HCT116 (cell line): ENCODE measurements at regions of chr5 and their contacts with region 1.

Region 1: GRCh38 chr5:87400305-87400899 is 12.3 kb downstream of the CCNH start:
- DNase-seq: peak; percentile 10
- ATAC-seq: peak; percentile 73
- H3K4me3 ChIP-seq: no peak overlapping the region
- H3K27ac ChIP-seq: no peak overlapping the region
- H3K4me1 ChIP-seq: no peaks in the 10 kb centered on the region
- H3K27me3 ChIP-seq: no peaks in the 10 kb centered on the region
- CTCF ChIP-seq: peak; percentile 44 to 68 (median 53); a peak in 5 of 6 replicates
- POLR2A ChIP-seq: no peak
- RAD21 ChIP-seq: peak; percentile 72

Region 2: DNA sequence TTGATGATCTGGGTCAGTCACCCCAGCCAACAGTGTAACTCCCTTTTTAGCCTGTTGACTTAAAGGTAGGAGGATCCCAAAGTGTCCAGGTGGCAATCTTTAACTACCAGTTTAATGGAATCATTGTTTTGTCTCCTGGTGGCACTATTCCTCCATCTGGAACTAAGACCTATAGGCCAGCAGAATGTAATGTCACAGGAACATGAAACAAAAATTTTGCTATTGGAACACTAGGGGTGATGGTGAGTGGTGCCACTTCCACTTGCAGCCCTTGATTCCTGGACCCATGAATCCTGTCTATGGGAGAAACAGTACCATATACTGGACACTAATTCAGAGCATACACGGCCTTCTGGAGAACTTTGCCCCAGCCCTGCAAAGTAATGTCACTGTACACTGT is 352.2 kb before region 1 on chr5:
- CTCF ChIA-PET with region 1: no interaction called
- POLR2A ChIA-PET with region 1: no interaction called
- RAD21 ChIA-PET with region 1: no interaction called
- intact Hi-C with region 1: loop called (anchors 1 kb)
- DNase-seq: peak; percentile 19
- ATAC-seq: peak; percentile 67
- H3K4me3 ChIP-seq: no peak overlapping the region
- H3K27ac ChIP-seq: no peak overlapping the region
- H3K4me1 ChIP-seq: no peaks in the 10 kb centered on the region
- H3K27me3 ChIP-seq: no peaks in the 10 kb centered on the region
- CTCF ChIP-seq: peak; percentile 9 to 38 (median 28); a peak in 2 of 6 replicates
- POLR2A ChIP-seq: no peak
- RAD21 ChIP-seq: peak; percentile 47

Region 3: DNA sequence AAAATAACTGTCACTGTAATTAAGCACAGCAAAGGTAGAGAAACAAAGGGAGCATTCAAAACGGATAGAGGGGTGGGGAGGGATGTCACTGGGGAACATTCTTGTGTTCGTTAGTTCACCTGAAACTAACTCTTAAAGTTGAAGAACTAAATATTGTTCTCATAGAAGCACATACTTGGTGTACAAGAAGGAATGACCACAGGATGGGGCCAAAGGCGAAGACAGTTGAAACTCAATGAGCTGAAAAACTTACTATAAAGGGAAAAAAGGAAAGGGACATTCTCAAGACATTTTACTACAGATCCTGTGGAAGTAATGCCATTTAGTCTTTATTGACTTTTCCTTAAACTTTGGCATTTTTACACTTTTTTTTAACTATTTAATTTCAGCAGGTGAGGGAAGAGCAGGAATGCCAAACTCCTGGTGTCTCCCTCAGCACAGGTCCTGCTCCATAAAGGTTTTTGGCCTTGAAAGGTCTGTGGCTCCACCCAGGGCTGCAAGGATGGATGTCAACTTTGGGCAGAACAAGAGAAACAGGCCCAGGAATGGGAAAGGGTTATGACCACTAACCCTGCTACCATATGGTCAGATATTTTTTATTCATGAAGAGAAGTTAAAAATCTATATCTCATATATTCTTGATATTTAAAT is 330.3 kb before region 1 on chr5:
- CTCF ChIA-PET with region 1: interaction called, 29 read pairs
- POLR2A ChIA-PET with region 1: no interaction called
- RAD21 ChIA-PET with region 1: interaction called, 3 to 5 read pairs
- intact Hi-C with region 1: loop called (anchors 2 kb)
- DNase-seq: peak; percentile 21
- ATAC-seq: peak; percentile 49
- H3K4me3 ChIP-seq: no peak overlapping the region
- H3K27ac ChIP-seq: no peak overlapping the region
- H3K4me1 ChIP-seq: peaks cover 1 to 10% of the 10 kb centered on the region in 2 experiments; a peak in 2 of 4 replicates
- H3K27me3 ChIP-seq: no peaks in the 10 kb centered on the region
- CTCF ChIP-seq: peak in 2 of 3 experiments; percentile 37 to 46; a peak in 3 of 6 replicates
- POLR2A ChIP-seq: no peak
- RAD21 ChIP-seq: peak; percentile 79

Region 4: DNA sequence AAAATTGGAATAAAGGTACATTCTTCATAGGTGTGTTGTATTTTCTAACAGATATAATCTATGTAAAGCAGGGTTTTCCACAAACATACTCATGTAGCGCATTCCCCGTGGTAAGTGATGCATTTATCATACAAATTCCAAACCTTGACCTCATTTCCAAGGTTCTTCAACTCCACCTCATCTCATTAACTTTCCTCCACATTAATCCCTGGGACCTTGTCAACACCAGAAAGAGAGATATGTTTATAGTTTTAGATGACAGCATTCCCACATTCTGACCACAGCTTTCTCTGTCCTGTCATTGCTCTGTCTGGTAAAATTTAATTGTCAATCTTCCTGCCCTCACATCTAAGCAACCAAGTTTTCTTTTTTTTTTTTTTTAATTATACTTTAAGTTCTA is 453.1 kb after region 1 on chr5:
- CTCF ChIA-PET with region 1: no interaction called
- POLR2A ChIA-PET with region 1: no interaction called
- RAD21 ChIA-PET with region 1: no interaction called
- intact Hi-C with region 1: no loop called
- DNase-seq: no peak
- ATAC-seq: no peak
- H3K4me3 ChIP-seq: no peak overlapping the region
- H3K27ac ChIP-seq: no peak overlapping the region
- H3K4me1 ChIP-seq: no peaks in the 10 kb centered on the region
- H3K27me3 ChIP-seq: no peaks in the 10 kb centered on the region
- CTCF ChIP-seq: no peak
- POLR2A ChIP-seq: no peak
- RAD21 ChIP-seq: no peak